HepG2 (cell line): ENCODE measurements at regions of chr7 and their contacts with region 1.

Region 1: DNA sequence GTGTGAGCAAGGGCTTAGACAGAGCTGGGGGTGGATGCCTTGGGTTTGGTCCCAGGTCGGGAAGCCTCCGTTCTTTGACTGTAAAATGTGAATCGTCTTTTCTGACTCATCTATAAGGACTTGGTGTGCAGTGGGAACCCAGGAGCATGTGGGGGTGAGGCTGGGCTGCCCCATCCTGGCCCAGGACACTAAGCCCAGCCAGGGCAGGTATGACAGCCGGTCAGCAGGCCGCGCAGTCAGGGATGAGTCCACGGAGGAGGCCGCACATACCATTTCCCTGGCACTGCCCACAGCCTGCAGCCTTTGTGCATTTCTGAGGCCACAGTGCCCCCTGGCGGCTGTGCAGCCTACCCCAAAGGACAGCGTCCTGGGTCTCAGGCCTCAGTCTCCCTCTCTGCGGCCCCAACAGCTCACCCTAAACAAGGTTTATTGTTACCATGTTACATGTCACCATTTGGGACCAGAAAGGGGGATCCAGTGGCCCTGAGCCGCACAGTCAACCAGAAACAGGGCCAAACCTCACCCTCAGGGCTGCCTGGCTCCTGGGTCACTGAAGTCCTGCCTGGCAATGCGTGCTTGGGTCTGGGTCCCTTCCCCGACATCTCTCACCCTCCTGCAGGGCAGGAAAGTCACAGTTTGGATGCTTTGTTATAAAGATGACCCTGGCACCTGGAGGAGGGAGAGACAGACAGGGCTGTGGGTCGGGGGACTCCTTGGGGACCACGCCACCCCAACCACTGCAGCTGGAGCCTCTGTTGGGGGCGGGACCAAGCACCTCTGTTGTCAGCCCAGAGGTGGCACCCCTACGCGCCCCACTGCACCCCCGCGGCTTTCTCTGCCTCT is 14.4 kb upstream of the SH2B2 start:
- DNase-seq: peak; percentile 65
- ATAC-seq: peak; percentile 75
- H3K4me3 ChIP-seq: peak overlapping the region in 1 of 3 experiments; percentile 40; a peak in 1 of 6 replicates
- H3K27ac ChIP-seq: no peak overlapping the region
- H3K4me1 ChIP-seq: peaks cover 45% of the 10 kb centered on the region
- H3K27me3 ChIP-seq: no peaks in the 10 kb centered on the region; a peak in 1 of 5 replicates
- CTCF ChIP-seq: peak; percentile 99
- EP300 ChIP-seq: no peak
- POLR2A ChIP-seq: no peak
- RAD21 ChIP-seq: peak; percentile 98

Region 2: DNA sequence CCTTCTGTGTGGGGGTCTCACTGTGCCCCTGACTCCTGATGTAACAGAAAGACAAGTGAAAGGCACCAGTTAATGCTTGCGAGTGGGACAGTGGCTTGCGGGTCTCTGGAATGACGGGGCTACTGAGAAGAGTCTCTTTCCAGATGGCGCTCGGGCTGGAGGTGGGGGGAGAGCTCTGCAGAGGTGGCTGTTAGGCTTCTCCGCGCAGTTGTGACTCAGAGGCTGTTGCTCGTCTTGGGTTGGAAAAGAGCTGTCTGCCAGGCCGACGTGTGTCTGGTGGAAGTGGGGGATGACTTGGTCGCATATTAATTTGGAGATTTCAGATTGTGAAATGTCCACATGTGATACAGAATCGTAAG is 13.6 kb before region 1 on chr7:
- CTCF ChIA-PET with region 1: no interaction called
- POLR2A ChIA-PET with region 1: no interaction called
- in situ Hi-C with region 1: no loop called
- intact Hi-C with region 1: loop called (anchors 2 kb)
- DNase-seq: no peak
- ATAC-seq: no peak
- H3K4me3 ChIP-seq: peak overlapping the region in 1 of 3 experiments; percentile 24; a peak in 1 of 6 replicates
- H3K27ac ChIP-seq: peak overlapping the region; percentile 88
- H3K4me1 ChIP-seq: peaks cover 63% of the 10 kb centered on the region
- H3K27me3 ChIP-seq: no peaks in the 10 kb centered on the region
- CTCF ChIP-seq: no peak
- EP300 ChIP-seq: no peak
- POLR2A ChIP-seq: no peak
- RAD21 ChIP-seq: no peak